ENCODE measurements at regions of chr14 and their contacts with region 1.

Region 1: GRCh38 chr14:99188731-99189191 is 83.2 kb downstream of the BCL11B start:
- DNase-seq: peak; percentile 58
- H3K4me3 Mint-ChIP-seq: peak overlapping the region; percentile 78
- H3K27ac Mint-ChIP-seq: peak overlapping the region; percentile 95
- H3K4me1 Mint-ChIP-seq: peaks cover 97% of the 10 kb centered on the region
- H3K27me3 Mint-ChIP-seq: no peaks in the 10 kb centered on the region

Region 2: DNA sequence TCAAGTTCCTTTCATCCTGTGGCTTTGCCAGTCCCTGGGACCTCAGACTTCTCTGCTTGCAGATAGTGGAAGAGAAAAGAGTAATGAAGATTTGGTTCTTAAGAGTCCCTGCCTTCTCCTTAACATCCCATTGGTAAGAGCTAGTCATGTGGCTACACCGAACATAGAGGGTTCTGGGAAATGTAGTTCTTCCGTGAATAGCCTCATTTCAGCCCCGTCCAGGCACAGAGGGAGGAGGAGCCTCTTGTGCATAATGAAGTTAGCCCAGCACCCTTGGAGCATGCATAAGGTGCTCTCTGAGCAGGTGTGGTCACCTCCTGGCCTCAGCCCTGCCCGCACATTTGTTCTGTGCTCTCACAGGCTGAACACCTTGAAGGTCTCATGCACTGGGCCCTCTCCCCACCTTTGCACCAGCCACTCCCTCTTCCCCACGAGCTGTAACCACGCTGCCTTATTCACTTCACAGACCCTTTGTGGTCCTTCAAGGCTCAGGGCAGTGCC is 50.7 kb before region 1 on chr14:
- CTCF ChIA-PET with region 1: no interaction called
- DNase-seq: no peak
- H3K4me3 Mint-ChIP-seq: no peak overlapping the region
- H3K27ac Mint-ChIP-seq: no peak overlapping the region
- H3K4me1 Mint-ChIP-seq: peaks cover 10% of the 10 kb centered on the region
- H3K27me3 Mint-ChIP-seq: peaks cover 7% of the 10 kb centered on the region

Region 3: GRCh38 chr14:99230208-99231151 is 41.7 kb after region 1 on chr14:
- CTCF ChIA-PET with region 1: interaction called, 10 read pairs
- DNase-seq: peak; percentile 93
- H3K4me3 Mint-ChIP-seq: peak overlapping the region; percentile 74
- H3K27ac Mint-ChIP-seq: peak overlapping the region; percentile 99
- H3K4me1 Mint-ChIP-seq: peaks cover 97% of the 10 kb centered on the region
- H3K27me3 Mint-ChIP-seq: peaks cover 4% of the 10 kb centered on the region